Breast epithelium (tissue), 4 donors: ENCODE measurements at regions of chr2 and their contacts with region 1.

Region 1: DNA sequence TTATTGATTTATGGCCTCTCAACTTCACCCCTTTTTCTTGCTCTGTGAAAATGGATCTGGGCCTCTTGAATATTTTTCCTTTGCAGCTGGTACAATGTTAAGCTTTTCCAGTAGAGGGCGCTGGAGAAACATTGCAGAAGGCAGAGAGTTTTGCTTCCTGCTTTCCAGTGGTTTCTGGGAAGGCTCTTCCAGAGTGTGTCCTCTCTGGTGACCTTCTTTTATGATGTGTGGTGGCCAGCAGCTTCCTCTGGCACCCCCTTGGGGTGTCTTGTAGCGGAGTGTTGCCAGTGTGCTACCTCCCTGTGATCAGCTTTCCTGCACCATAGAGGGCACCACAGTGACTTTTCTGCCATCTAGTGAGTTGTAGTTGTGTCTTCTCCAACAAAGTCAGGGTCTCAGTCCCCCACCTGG is 25.4 kb upstream of the MGAT5 start:
- DNase-seq: no peak
- H3K4me3 ChIP-seq: no peak overlapping the region
- H3K27ac ChIP-seq: no peak overlapping the region
- H3K4me1 ChIP-seq: no peaks in the 10 kb centered on the region
- H3K27me3 ChIP-seq: no peaks in the 10 kb centered on the region
- CTCF ChIP-seq: no peak
- POLR2A ChIP-seq: no peak

Region 2: DNA sequence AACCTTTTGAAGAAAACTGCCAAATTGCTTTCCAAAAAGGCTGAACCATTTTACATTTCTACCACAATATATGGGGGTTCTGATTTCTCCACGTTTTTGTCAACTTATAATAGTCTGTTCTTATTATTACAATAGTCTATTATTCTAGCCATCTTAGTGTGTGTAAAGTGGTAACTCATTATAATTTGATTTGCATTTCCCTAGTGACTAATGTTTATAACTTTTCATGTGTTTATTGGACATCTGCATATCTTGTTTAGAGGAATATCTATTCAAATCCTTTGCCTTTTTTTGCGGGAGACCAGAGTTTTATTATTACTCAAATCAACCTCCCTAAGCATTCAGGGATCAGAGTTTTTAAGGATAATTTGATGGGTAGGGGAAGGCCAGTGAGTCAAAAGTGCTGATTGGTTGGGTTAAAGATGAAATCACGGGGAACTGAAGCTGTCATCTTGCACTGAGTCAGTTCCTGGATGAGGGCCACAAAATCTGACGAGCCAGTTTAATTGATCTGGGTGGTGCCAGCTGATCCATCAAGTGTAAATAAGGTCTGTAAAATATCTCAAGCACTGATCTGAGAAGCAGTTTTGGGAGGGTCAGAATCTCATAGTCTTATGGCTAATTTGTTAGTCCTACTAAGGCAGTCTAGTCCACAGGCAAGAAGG is 356.8 kb before region 1 on chr2:
- intact Hi-C with region 1: loop called (anchors 10 kb)
- DNase-seq: no peak
- H3K4me3 ChIP-seq: no peak overlapping the region
- H3K27ac ChIP-seq: no peak overlapping the region
- H3K4me1 ChIP-seq: no peaks in the 10 kb centered on the region
- H3K27me3 ChIP-seq: peaks cover 0 to 2% of the 10 kb centered on the region in 2 donors
- CTCF ChIP-seq: no peak
- POLR2A ChIP-seq: no peak

Region 3: GRCh38 chr2:134146620-134147019 is 81.9 kb before region 1 on chr2:
- intact Hi-C with region 1: loop called (anchors 2 kb)
- DNase-seq: peak in 1 of 2 donors; percentile 76
- H3K4me3 ChIP-seq: no peak overlapping the region
- H3K27ac ChIP-seq: peak overlapping the region; percentile 31 to 45
- H3K4me1 ChIP-seq: no peaks in the 10 kb centered on the region
- H3K27me3 ChIP-seq: no peaks in the 10 kb centered on the region
- CTCF ChIP-seq: no peak
- POLR2A ChIP-seq: no peak